ENCODE measurements at regions of chr9 and their contacts with region 1.

Region 1: GRCh38 chr9:81609782-81610739 is 79.3 kb downstream of the TLE1 start:
- DNase-seq: peak in 1 of 2 donors; percentile 57
- ATAC-seq: peak; percentile 48 to 59
- H3K4me3 ChIP-seq: no peak overlapping the region
- H3K27ac ChIP-seq: peak overlapping the region; percentile 79 to 90 (median 86)
- H3K4me1 ChIP-seq: peaks cover 37 to 51% of the 10 kb centered on the region in 2 donors
- H3K27me3 ChIP-seq: no peaks in the 10 kb centered on the region
- CTCF ChIP-seq: peak in 1 of 5 experiments; percentile 15
- POLR2A ChIP-seq: no peak

Region 2: DNA sequence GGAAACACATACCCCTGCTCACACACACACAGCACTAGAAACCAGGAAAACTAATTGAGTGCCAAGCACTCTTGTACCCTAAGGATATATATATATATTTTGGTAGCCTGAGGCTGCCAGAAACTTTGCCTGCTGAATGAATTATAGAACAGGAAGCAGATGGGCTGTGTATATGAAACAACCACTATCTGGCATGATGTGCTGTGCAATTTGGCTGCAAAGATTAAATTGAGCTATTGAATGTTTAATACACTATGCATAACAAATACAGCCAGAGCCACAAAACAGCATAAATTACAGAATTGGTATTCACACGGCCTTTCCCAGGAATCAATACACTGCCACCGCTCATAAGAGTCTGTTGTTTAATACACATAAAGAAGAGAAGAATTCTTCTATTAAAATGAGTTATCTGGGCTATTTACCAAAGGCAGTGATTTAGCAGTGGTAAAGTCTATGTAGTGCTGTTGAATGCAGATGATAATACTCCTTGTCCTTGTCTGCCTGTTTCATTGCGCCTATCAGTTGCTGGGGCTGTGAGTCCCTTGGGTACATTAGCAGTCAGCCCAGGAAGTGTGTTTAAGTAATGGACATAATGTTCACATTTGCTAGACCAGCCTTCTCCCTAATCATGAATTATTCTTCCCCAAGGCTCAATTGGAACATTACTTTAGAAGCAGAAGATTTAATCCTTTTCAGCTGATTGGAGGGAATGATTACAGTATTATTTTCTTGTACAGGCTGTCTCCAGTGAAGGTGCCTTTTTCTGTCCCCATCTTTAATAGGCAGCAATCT is 215.0 kb before region 1 on chr9:
- in situ Hi-C with region 1: no loop called
- intact Hi-C with region 1: loop called (anchors 5 kb)
- DNase-seq: no peak
- ATAC-seq: peak in 1 of 2 donors; percentile 46
- H3K4me3 ChIP-seq: no peak overlapping the region
- H3K27ac ChIP-seq: peak overlapping the region; percentile 29 to 66 (median 60)
- H3K4me1 ChIP-seq: peaks cover 16 to 24% of the 10 kb centered on the region in 2 donors
- H3K27me3 ChIP-seq: no peaks in the 10 kb centered on the region
- CTCF ChIP-seq: no peak
- POLR2A ChIP-seq: no peak

Region 3: GRCh38 chr9:81465468-81466011 is 144.5 kb before region 1 on chr9:
- in situ Hi-C with region 1: no loop called
- intact Hi-C with region 1: loop called (anchors 10 kb)
- DNase-seq: peak; percentile 40 to 45
- ATAC-seq: peak; percentile 92 to 97
- H3K4me3 ChIP-seq: peak overlapping the region; percentile 24 to 37 (median 35)
- H3K27ac ChIP-seq: peak overlapping the region; percentile 74 to 91 (median 86)
- H3K4me1 ChIP-seq: peaks cover 16 to 26% of the 10 kb centered on the region in 2 donors
- H3K27me3 ChIP-seq: no peaks in the 10 kb centered on the region
- CTCF ChIP-seq: peak; percentile 16 to 52 (median 46)
- POLR2A ChIP-seq: peak; percentile 33 to 77

Region 4: GRCh38 chr9:81535542-81536241 is 74.4 kb before region 1 on chr9:
- in situ Hi-C with region 1: no loop called
- intact Hi-C with region 1: loop called (anchors 5 kb)
- DNase-seq: no peak
- ATAC-seq: no peak
- H3K4me3 ChIP-seq: no peak overlapping the region
- H3K27ac ChIP-seq: peak overlapping the region in 1 of 4 donors; percentile 86
- H3K4me1 ChIP-seq: peaks cover 13 to 23% of the 10 kb centered on the region in 2 donors
- H3K27me3 ChIP-seq: no peaks in the 10 kb centered on the region
- CTCF ChIP-seq: no peak
- POLR2A ChIP-seq: no peak

Region 5: DNA sequence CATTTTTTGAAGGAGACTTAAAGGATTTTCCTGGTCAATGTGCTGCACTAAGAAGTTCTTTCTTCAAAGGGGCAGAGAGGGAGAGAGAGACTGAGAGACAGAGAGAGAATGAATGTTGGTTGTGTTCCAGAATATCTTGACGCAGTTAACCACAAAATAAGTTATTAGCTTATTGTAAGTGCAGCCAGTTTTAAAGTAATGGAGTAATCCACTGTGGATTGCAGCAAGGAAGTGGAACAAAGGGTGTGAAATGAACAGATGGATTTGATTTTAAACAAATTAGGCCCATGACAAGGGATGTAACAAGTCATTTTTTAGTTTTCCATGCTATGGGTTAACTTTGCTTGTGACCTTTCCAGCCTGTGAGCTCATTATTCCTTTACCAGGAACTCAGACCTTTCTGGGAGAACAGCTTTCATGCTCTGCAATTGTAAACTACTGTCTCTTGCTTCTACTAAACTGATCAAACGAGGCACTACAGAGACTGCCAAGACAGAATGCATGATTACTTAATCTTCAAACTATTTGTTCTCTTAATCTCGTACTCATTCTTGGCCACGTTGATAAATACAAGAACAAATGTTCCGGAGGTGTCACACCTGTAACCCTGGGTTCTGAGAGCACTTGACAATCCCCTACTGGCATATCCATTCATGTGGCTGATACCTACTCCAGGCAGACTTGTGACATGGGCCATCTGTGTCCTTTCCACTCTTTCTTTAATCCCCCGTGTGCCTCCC is 51.8 kb before region 1 on chr9:
- in situ Hi-C with region 1: no loop called
- intact Hi-C with region 1: loop called (anchors 1 kb)
- DNase-seq: no peak
- ATAC-seq: peak in 1 of 2 donors; percentile 11
- H3K4me3 ChIP-seq: no peak overlapping the region
- H3K27ac ChIP-seq: peak overlapping the region; percentile 34 to 53 (median 44)
- H3K4me1 ChIP-seq: peaks cover 8 to 27% of the 10 kb centered on the region in 2 donors
- H3K27me3 ChIP-seq: no peaks in the 10 kb centered on the region
- CTCF ChIP-seq: no peak
- POLR2A ChIP-seq: no peak